BJ (cell line): ENCODE measurements at regions of chr17 and their contacts with region 1.

Region 1: DNA sequence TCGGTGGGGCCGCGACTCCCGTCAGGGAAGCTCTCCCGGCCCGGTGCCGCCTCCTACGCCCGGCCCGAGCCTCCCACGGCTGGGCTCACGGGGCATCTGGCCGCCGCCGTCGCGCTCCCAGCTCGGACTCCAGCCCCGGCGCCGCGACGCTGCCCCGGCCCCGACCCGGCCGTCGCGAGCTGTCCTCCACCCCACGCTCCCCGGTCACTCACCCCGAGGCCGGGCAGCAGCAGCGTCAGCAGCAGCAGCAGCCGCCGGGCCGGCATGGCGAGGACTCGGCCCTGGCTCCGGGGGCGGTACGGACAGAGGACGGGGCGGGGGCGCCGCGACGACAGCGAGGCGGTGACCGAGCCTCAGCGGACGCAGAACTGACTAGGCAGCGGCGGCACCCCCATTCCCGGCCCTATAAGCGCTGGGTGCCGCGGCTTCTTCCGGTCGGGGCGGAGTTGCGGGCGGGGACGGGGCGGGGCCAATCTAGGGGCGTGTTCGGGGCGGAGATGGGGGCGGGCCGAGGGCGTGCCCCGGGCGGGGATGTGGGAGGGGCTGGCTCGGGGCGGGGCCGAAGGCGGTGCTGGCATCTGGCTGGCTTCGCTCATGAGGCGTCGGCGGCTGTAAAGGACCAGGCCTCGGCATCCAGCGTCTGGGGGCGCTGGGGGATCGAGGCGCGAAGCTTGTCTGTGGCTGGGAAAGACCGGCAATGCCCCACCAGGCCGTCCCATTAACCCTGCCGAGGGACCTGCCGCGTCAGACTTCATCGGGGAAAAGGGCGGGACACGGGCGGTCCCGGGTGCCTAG is at the start of gene ERN1:
- DNase-seq: no peak
- H3K4me3 ChIP-seq: peak within 1 kb of the TSS; percentile 69
- H3K27me3 ChIP-seq: no peaks in the 10 kb centered on the region
- CTCF ChIP-seq: no peak
- polyA plus RNA-seq, gene ERN1: 8.5 and 8.6 TPM in 2 replicates

Region 2: GRCh38 chr17:63911657-63912426 is 218.1 kb before region 1 on chr17:
- CTCF ChIA-PET with region 1: interaction called, 16 read pairs
- POLR2A ChIA-PET with region 1: no interaction called
- DNase-seq: no peak
- H3K4me3 ChIP-seq: no peak overlapping the region
- H3K27me3 ChIP-seq: peaks cover 10% of the 10 kb centered on the region
- CTCF ChIP-seq: peak; percentile 72

Region 3: GRCh38 chr17:64020056-64020766 is 109.8 kb before region 1 on chr17 and contains the start of gene ICAM2:
- CTCF ChIA-PET with region 1: interaction called, 388 read pairs
- POLR2A ChIA-PET with region 1: interaction called, 3 read pairs
- DNase-seq: no peak
- H3K4me3 ChIP-seq: peak within 1 kb of the TSS; percentile 21
- H3K27me3 ChIP-seq: no peaks in the 10 kb centered on the region
- CTCF ChIP-seq: no peak
- polyA plus RNA-seq, gene ICAM2: 0.91 and 1.6 TPM in 2 replicates

Region 4: DNA sequence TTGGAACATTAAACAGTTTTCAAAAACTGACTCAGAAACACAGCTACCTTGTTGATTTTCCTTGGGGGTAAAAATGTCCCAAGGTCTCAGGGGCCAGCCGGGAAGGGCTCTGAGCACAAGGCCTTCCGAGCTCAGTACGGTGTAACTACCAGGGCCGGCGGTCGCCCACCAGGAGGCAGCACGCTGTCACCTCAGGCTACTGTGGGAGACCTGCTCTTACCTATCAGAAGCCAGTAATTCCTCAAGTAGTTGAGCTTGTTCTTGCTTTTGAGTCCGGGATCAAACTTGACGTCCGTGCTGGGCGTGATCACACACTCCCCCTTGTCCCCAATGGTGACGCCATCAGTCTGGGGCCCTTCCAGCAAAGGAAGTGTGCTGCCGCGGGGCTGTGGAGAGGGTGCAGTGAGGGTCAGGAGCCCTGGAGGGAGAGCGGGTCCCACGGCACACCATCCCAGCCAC is 66.2 kb before region 1 on chr17:
- CTCF ChIA-PET with region 1: interaction called, 57 read pairs
- POLR2A ChIA-PET with region 1: no interaction called
- DNase-seq: no peak
- H3K4me3 ChIP-seq: no peak overlapping the region
- H3K27me3 ChIP-seq: no peaks in the 10 kb centered on the region
- CTCF ChIP-seq: peak; percentile 46

Region 5: DNA sequence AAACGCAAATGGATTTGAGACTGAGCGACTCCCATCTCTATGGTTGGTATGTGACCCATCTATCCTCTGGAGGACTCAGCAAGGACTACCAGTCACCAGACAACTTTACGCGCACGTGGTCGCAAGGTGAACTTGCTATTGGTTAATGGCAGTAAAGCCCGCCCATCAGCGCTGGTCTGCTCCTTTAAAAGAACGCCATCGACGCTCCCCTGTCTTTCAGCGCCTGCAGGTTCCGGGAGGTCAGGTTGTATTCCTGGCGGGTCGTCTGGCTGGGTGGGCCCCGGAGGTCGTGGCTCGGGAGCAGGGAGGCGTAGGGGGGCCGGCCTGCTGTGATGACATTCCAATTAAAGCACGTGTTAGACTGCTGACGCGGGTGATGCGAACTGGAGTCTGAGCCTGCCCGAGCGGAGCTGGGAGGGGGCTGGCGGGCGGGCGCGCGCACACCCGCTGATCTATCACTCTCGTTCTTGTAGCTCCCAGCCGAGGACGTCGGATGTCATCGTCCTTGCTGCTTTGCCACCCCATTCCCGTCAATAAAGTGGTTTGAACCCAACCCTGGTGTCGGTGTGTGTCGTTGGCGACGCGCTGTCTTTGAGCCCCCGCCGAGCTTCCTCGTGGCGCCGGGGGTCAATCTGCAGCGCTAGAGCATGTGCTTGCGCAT is 15.9 kb after region 1 on chr17:
- CTCF ChIA-PET with region 1: interaction called, 58 read pairs
- POLR2A ChIA-PET with region 1: interaction called, 7 read pairs
- DNase-seq: peak; percentile 96
- H3K4me3 ChIP-seq: peak overlapping the region; percentile 88
- H3K27me3 ChIP-seq: no peaks in the 10 kb centered on the region
- CTCF ChIP-seq: no peak

Region 6: DNA sequence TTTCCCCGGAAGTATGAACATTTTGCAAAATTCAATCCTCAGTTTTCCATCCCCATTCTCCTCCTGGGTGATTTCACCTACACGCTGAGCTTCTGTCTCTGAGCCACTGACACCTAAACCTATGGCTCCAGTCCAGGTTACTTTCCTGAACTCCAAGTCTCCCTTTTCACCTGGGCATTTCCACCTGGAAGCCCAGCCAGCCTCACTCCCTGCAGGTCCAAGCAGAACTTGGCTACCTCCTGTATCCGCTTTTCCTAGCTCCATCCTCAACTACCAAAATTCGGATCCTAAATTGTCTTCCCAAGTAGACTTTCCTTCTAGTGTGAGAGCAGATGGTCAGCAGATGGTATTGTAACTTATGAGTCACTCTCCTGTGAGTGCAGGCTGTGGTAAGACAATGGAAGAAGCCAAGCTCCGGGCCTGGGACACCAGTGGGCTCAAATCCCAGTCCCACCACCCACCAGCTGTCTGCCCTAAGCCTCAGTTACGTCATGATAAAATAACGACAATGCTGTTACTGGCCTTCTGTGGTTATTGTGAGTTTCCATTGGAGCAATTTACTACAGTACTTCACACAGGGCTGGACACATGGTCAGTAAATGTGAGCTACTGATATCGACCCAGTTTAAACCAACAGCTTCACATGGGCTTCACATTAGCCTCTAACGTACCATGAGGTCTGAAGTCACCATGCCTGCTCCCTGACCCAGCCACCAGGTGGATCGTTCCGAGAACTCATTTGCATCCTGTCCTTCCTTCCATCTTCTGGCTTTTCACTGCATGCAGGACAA is 227.4 kb after region 1 on chr17:
- CTCF ChIA-PET with region 1: no interaction called
- POLR2A ChIA-PET with region 1: no interaction called
- DNase-seq: peak; percentile 99
- H3K4me3 ChIP-seq: no peak overlapping the region
- H3K27me3 ChIP-seq: peaks cover 9% of the 10 kb centered on the region
- CTCF ChIP-seq: 0 out of 2 replicates have a peak, but pooled peaks have one; percentile 5